HCT116 (cell line): ENCODE measurements at regions of chr1 and their contacts with region 1.

Region 1: GRCh38 chr1:185813401-185813979 is 79.3 kb downstream of the HMCN1 start:
- DNase-seq: peak; percentile 43
- ATAC-seq: peak; percentile 84
- H3K4me3 ChIP-seq: no peak overlapping the region
- H3K27ac ChIP-seq: no peak overlapping the region
- H3K4me1 ChIP-seq: no peaks in the 10 kb centered on the region
- H3K27me3 ChIP-seq: no peaks in the 10 kb centered on the region
- CTCF ChIP-seq: peak; percentile 50 to 68 (median 54); a peak in 5 of 6 replicates
- POLR2A ChIP-seq: no peak
- RAD21 ChIP-seq: peak; percentile 66

Region 2: GRCh38 chr1:186094170-186094569 is 280.7 kb after region 1 on chr1:
- CTCF ChIA-PET with region 1: no interaction called
- POLR2A ChIA-PET with region 1: no interaction called
- RAD21 ChIA-PET with region 1: no interaction called
- intact Hi-C with region 1: loop called (anchors 1 kb)
- DNase-seq: no peak
- ATAC-seq: no peak
- H3K4me3 ChIP-seq: no peak overlapping the region
- H3K27ac ChIP-seq: no peak overlapping the region
- H3K4me1 ChIP-seq: no peaks in the 10 kb centered on the region
- H3K27me3 ChIP-seq: no peaks in the 10 kb centered on the region
- CTCF ChIP-seq: no peak
- POLR2A ChIP-seq: no peak
- RAD21 ChIP-seq: no peak